Heart left ventricle (tissue), 16 donors: ENCODE measurements at regions of chr3 and their contacts with region 1.

Region 1: DNA sequence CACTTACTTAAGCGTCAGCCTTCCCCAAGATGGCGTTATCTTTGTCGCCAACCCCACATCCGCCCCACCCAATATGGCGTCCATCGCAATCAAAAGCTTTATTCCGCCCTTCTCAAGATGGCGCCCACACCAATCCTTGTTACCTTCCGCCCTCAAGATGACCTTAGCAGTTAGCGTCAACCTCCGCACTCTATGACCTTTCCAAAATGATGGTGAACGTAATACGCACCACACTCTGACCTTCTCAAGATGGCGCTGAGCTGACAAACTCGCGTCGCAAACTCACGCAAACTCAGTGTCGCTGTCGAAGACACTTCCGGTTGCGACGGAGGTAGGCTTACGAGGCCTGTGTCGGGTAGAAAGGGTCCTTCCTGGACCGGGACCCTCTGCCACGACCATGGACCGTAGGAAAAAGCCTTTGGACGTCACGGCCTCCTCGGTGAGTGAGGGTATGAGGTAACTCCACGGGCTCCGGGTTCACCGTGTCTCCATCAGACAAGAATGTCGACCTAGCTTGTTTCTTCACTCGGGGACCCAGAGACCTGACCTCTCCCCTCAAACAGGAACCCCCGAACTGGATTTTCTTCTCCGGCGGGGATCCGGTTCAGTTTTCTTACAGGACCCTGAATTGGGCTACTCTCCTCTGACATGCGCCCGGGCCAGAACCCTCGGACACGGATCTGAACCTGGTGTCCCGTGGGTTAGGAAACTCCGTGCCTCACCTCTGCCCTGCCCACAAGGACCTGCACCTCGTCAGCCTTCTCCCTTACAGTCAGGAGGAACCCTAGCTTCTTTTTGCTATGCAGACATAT is at the start of gene CCDC174:
- DNase-seq: peak; percentile 92 to 97 (median 96)
- ATAC-seq: peak; percentile 98 to 99 (median 98)
- H3K4me3 ChIP-seq: peak within 1 kb of the TSS; percentile 59 to 93 (median 81)
- H3K27ac ChIP-seq: peak within 1 kb of the TSS; percentile 58 to 96 (median 90)
- H3K4me1 ChIP-seq: peaks cover 0 to 43% (median 32%) of the 10 kb centered on the region in 12 donors
- H3K27me3 ChIP-seq: no peaks in the 10 kb centered on the region
- CTCF ChIP-seq: peak in 1 of 12 donors; percentile 15
- POLR2A ChIP-seq: peak in 1 of 2 donors; percentile 74
- total RNA-seq, gene CCDC174: 8.7 to 16.1 (median 11.7) TPM

Region 2: GRCh38 chr3:14391033-14391432 is 260.6 kb before region 1 on chr3:
- intact Hi-C with region 1: no loop called
- DNase-seq: peak in 2 of 5 donors; percentile 57 to 71
- ATAC-seq: peak in 3 of 4 donors; percentile 31 to 74 (median 72)
- H3K4me3 ChIP-seq: no peak overlapping the region
- H3K27ac ChIP-seq: no peak overlapping the region
- H3K4me1 ChIP-seq: peaks cover 0 to 15% (median 1%) of the 10 kb centered on the region in 12 donors
- H3K27me3 ChIP-seq: peaks cover 0 to 12% (median 0%) of the 10 kb centered on the region in 9 donors
- CTCF ChIP-seq: no peak
- POLR2A ChIP-seq: no peak

Region 3: GRCh38 chr3:15098503-15099363 is 447.1 kb after region 1 on chr3 and contains the start of gene RBSN:
- intact Hi-C with region 1: loop called in 4 of 10 experiments (anchors 10 kb)
- DNase-seq: peak; percentile 94 to 98 (median 97)
- ATAC-seq: peak; percentile 38 to 79 (median 76)
- H3K4me3 ChIP-seq: peak within 1 kb of the TSS; percentile 75 to 93 (median 82)
- H3K27ac ChIP-seq: peak within 1 kb of the TSS; percentile 54 to 94 (median 87)
- H3K4me1 ChIP-seq: peaks cover 3 to 46% (median 18%) of the 10 kb centered on the region in 12 donors
- H3K27me3 ChIP-seq: no peaks in the 10 kb centered on the region
- CTCF ChIP-seq: no peak
- POLR2A ChIP-seq: peak in 1 of 2 donors; percentile 89
- total RNA-seq, gene RBSN: 17.9 to 24.1 (median 21.6) TPM